H1 (cell line): ENCODE measurements at regions of chr12 and their contacts with region 1.

Region 1: GRCh38 chr12:64679487-64679983 is 69.2 kb downstream of the RASSF3 start:
- DNase-seq: no peak
- H3K4me3 ChIP-seq: no peak overlapping the region
- H3K27ac ChIP-seq: no peak overlapping the region
- H3K4me1 ChIP-seq: peaks cover 2 to 16% (median 7%) of the 10 kb centered on the region in 4 experiments; a peak in 6 of 7 replicates
- H3K27me3 ChIP-seq: no peaks in the 10 kb centered on the region
- CTCF ChIP-seq: no peak
- EP300 ChIP-seq: no peak
- POLR2A ChIP-seq: no peak
- RAD21 ChIP-seq: no peak

Region 2: DNA sequence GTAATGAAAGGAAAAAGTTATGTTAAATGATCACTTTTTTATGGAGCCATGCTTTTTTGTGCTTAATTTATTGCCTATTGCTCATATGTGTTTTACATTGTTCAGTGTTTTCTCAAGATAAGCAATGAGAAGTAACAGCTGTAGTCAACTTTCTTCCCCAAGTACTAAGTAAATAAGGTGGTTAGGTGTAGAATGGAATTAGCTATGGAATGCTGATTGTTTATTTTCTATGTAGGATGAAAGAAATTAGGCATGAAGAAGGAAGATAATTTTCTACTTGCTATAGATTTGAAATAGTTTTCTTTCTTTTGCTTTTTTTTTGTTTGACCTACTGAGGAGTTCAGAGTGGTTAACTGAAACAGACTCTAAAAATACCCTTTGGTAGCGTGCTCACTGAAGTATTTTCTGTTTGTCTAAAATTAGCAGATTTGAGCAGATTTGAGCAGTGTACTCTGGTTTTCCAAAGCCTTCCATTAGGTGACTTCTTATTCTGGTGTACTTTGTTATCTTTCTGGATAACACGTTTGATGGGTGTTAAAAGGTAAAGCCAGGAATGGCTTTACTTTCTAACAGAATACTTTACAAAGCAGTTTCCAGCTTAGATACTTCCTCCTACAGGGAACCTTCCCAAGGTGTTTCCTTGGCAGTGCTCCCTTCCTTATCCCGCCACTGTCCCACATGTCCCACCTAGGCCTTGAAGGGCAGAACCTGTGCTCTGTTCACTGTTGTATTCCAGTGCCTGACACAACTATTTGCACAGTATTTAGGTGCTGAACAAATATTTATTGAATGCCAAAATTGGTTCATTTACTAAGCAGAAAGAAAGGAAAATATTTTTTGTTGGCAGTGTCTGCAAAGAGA is 13.3 kb before region 1 on chr12:
- CTCF ChIA-PET with region 1: interaction called, 10 read pairs
- POLR2A ChIA-PET with region 1: interaction called, 4 read pairs
- DNase-seq: no peak
- H3K4me3 ChIP-seq: no peak overlapping the region
- H3K27ac ChIP-seq: no peak overlapping the region
- H3K4me1 ChIP-seq: peaks cover 5 to 29% (median 25%) of the 10 kb centered on the region in 4 experiments
- H3K27me3 ChIP-seq: no peaks in the 10 kb centered on the region
- CTCF ChIP-seq: no peak
- EP300 ChIP-seq: no peak
- POLR2A ChIP-seq: no peak
- RAD21 ChIP-seq: no peak

Region 3: DNA sequence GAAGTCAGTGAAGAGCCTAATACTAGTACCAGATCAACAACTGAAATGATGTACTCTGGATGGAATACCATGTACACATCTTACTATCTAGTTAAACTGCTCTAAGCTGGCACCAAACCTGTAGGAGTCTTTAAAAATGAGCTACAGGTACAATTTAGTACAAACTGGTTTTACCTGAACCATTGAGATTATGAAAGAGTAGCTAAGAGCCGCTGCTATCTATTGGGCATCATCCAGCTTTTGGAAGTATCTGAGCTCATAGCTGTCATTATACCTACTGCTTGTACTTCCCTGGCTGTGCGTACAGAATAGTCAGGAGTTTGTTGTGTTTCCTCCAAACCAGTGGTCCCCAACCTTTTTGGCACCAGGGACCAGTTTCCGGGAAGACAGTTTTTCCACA is 157.3 kb after region 1 on chr12:
- CTCF ChIA-PET with region 1: no interaction called
- POLR2A ChIA-PET with region 1: no interaction called
- DNase-seq: no peak
- H3K4me3 ChIP-seq: no peak overlapping the region
- H3K27ac ChIP-seq: no peak overlapping the region
- H3K4me1 ChIP-seq: no peaks in the 10 kb centered on the region
- H3K27me3 ChIP-seq: no peaks in the 10 kb centered on the region
- CTCF ChIP-seq: no peak
- EP300 ChIP-seq: no peak
- POLR2A ChIP-seq: no peak
- RAD21 ChIP-seq: no peak